Adrenal gland (tissue), 19 donors: ENCODE measurements at regions of chr11 and their contacts with region 1.

Region 1: GRCh38 chr11:83061883-83062282 is 9.8 kb downstream of the RAB30 start:
- DNase-seq: no peak
- H3K4me3 ChIP-seq: no peak overlapping the region
- H3K27ac ChIP-seq: peak overlapping the region in 2 of 5 donors; percentile 74 to 82
- H3K4me1 ChIP-seq: peaks cover 11 to 36% of the 10 kb centered on the region in 2 donors
- H3K27me3 ChIP-seq: no peaks in the 10 kb centered on the region
- CTCF ChIP-seq: no peak
- POLR2A ChIP-seq: no peak

Region 2: GRCh38 chr11:83037889-83038288 is 24.0 kb before region 1 on chr11:
- intact Hi-C with region 1: loop called in 1 of 2 experiments (anchors 2 kb)
- DNase-seq: no peak
- H3K4me3 ChIP-seq: no peak overlapping the region
- H3K27ac ChIP-seq: no peak overlapping the region
- H3K4me1 ChIP-seq: peaks cover 22 to 56% of the 10 kb centered on the region in 2 donors
- H3K27me3 ChIP-seq: no peaks in the 10 kb centered on the region
- CTCF ChIP-seq: no peak
- POLR2A ChIP-seq: no peak

Region 3: GRCh38 chr11:83174008-83174407 is 112.1 kb after region 1 on chr11:
- intact Hi-C with region 1: no loop called
- DNase-seq: no peak
- H3K4me3 ChIP-seq: no peak overlapping the region
- H3K27ac ChIP-seq: peak overlapping the region in 2 of 5 donors; percentile 46 to 50
- H3K4me1 ChIP-seq: peaks cover 17 to 66% of the 10 kb centered on the region in 2 donors
- H3K27me3 ChIP-seq: no peaks in the 10 kb centered on the region
- CTCF ChIP-seq: no peak
- POLR2A ChIP-seq: no peak